GM10248 (cell line): ENCODE measurements at regions of chr17 and their contacts with region 1.

Region 1: GRCh38 chr17:3865176-3865575 is 19.1 kb upstream of the NCBP3 start:
- DNase-seq: no peak
- CTCF ChIP-seq: no peak

Region 2: GRCh38 chr17:3852561-3852960 is 12.6 kb before region 1 on chr17:
- CTCF ChIA-PET with region 1: interaction called, 73 read pairs
- POLR2A ChIA-PET with region 1: no interaction called
- DNase-seq: no peak
- CTCF ChIP-seq: no peak

Region 3: GRCh38 chr17:3885970-3886369 is 20.8 kb after region 1 on chr17:
- CTCF ChIA-PET with region 1: interaction called, 21 read pairs
- POLR2A ChIA-PET with region 1: no interaction called
- DNase-seq: no peak
- CTCF ChIP-seq: no peak

Region 4: DNA sequence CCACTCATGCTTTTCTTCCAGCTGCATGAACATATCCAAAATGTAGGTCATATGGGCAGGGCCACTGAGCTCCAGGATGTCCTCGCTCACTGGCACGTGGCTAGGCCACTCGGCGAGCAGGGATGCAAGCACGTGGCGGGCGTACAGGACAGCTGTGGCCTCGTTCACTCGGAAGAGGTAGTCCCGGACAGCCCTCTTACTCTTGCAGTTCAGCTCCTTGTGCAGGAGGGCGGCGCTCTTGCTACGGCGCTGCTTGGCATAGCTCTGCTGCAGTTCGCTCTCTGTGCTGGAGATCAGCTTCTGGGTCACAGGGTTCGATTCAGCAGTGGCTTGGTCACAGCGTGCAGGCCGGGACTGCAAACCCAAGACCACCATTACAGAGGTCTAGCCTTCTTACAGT is 152.2 kb after region 1 on chr17:
- CTCF ChIA-PET with region 1: no interaction called
- POLR2A ChIA-PET with region 1: no interaction called
- DNase-seq: no peak
- CTCF ChIP-seq: peak; percentile 20